ENCODE measurements at regions of chr18 and their contacts with region 1.

Region 1: GRCh38 chr18:43571078-43571689 is 293.9 kb upstream of the SYT4 start:
- DNase-seq: peak; percentile 27
- ATAC-seq: no peak
- H3K4me3 ChIP-seq: no peak overlapping the region
- H3K27ac ChIP-seq: no peak overlapping the region
- H3K4me1 ChIP-seq: no peaks in the 10 kb centered on the region
- H3K27me3 ChIP-seq: no peaks in the 10 kb centered on the region
- CTCF ChIP-seq: peak; percentile 57
- EP300 ChIP-seq: no peak
- POLR2A ChIP-seq: no peak
- RAD21 ChIP-seq: no peak

Region 2: GRCh38 chr18:42578781-42579180 is 992.4 kb before region 1 on chr18:
- CTCF ChIA-PET with region 1: no interaction called
- POLR2A ChIA-PET with region 1: no interaction called
- in situ Hi-C with region 1: loop called (anchors 25 kb)
- intact Hi-C with region 1: no loop called
- DNase-seq: no peak
- ATAC-seq: no peak
- H3K4me3 ChIP-seq: no peak overlapping the region
- H3K27ac ChIP-seq: no peak overlapping the region
- H3K4me1 ChIP-seq: no peaks in the 10 kb centered on the region
- H3K27me3 ChIP-seq: no peaks in the 10 kb centered on the region
- CTCF ChIP-seq: no peak
- EP300 ChIP-seq: no peak
- POLR2A ChIP-seq: no peak
- RAD21 ChIP-seq: no peak

Region 3: GRCh38 chr18:43587538-43588153 is 16.5 kb after region 1 on chr18:
- CTCF ChIA-PET with region 1: interaction called, 26 read pairs
- POLR2A ChIA-PET with region 1: no interaction called
- in situ Hi-C with region 1: no loop called
- intact Hi-C with region 1: loop called (anchors 1 kb)
- DNase-seq: peak; percentile 25
- ATAC-seq: peak; percentile 67
- H3K4me3 ChIP-seq: no peak overlapping the region
- H3K27ac ChIP-seq: no peak overlapping the region
- H3K4me1 ChIP-seq: no peaks in the 10 kb centered on the region
- H3K27me3 ChIP-seq: no peaks in the 10 kb centered on the region
- CTCF ChIP-seq: peak; percentile 59
- EP300 ChIP-seq: no peak
- POLR2A ChIP-seq: no peak
- RAD21 ChIP-seq: no peak

Measured in HepG2 (cell line).